Sigmoid colon (tissue), 7 donors: ENCODE measurements at regions of chr19 and their contacts with region 1.

Region 1: GRCh38 chr19:55516878-55517620 is 19.9 kb downstream of the SBK2 start:
- DNase-seq: peak; percentile 97
- H3K4me3 ChIP-seq: peak overlapping the region; percentile 35 to 57 (median 45)
- H3K27ac ChIP-seq: peak overlapping the region; percentile 83 to 94 (median 87)
- H3K4me1 ChIP-seq: peaks cover 0 to 17% (median 7%) of the 10 kb centered on the region in 4 donors
- H3K27me3 ChIP-seq: no peaks in the 10 kb centered on the region
- CTCF ChIP-seq: peak; percentile 82 to 93 (median 92)
- EP300 ChIP-seq: no peak
- POLR2A ChIP-seq: peak in 1 of 2 donors; percentile 39

Region 2: GRCh38 chr19:55580628-55581144 is 63.6 kb after region 1 on chr19 and contains the start of gene ZNF579:
- intact Hi-C with region 1: loop called (anchors 1 kb)
- DNase-seq: peak; percentile 93
- H3K4me3 ChIP-seq: peak within 1 kb of the TSS; percentile 71 to 90 (median 85)
- H3K27ac ChIP-seq: peak within 1 kb of the TSS; percentile 86 to 94 (median 90)
- H3K4me1 ChIP-seq: peaks cover 0 to 31% (median 23%) of the 10 kb centered on the region in 4 donors
- H3K27me3 ChIP-seq: no peaks in the 10 kb centered on the region
- CTCF ChIP-seq: no peak
- EP300 ChIP-seq: no peak
- POLR2A ChIP-seq: no peak
- total RNA-seq, gene ZNF579: 1.4 to 3.0 (median 2.2) TPM

Region 3: DNA sequence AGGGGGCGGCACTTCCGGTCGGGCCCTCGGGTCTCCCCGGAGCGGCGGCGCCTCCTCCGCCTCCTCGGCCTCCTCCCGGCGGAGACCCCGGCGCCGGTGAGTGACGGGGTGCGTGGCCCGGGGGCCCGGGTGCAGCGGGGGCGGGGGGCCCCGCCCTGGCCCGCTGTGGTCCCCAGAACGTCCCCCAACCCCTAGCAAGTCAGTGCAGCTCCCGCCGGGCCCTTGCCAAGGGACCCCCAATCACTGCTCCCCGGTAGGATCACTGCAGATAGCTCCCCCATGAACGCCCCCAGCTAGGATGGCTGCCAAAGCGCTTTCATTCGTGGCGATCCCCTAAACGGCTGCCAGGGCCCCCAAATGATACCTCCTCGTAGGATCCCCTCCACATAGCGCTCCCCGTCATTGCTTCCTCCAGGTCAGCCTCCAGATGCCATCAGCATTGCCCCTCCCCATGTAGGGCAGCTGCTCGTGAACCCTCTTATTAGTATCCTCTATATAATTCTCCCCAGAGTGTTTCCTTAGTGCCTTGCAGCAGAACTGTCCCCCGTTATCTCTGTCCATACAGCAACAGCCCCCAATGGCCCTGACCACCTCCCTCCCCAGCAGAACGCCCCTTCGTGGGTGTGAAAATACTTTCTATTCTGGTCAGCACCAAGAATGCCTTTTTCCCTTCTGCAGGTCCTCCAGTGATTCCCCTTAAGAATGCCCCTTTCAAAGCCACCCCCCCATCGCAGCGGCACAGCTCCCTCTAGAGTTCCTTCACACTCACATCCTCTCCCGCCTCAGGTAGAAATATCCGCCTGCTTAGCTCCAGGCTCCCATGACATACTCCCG is 88.8 kb after region 1 on chr19 and contains the start of gene ZNF865:
- intact Hi-C with region 1: loop called (anchors 1 kb)
- DNase-seq: peak; percentile 87
- H3K4me3 ChIP-seq: peak within 1 kb of the TSS; percentile 79 to 94 (median 90)
- H3K27ac ChIP-seq: peak within 1 kb of the TSS; percentile 95 to 98 (median 96)
- H3K4me1 ChIP-seq: peaks cover 0 to 40% (median 34%) of the 10 kb centered on the region in 4 donors
- H3K27me3 ChIP-seq: no peaks in the 10 kb centered on the region
- CTCF ChIP-seq: peak; percentile 40 to 66 (median 60)
- EP300 ChIP-seq: no peak
- POLR2A ChIP-seq: no peak
- total RNA-seq, gene ZNF865: 2.3 to 8.6 (median 3.4) TPM

Region 4: DNA sequence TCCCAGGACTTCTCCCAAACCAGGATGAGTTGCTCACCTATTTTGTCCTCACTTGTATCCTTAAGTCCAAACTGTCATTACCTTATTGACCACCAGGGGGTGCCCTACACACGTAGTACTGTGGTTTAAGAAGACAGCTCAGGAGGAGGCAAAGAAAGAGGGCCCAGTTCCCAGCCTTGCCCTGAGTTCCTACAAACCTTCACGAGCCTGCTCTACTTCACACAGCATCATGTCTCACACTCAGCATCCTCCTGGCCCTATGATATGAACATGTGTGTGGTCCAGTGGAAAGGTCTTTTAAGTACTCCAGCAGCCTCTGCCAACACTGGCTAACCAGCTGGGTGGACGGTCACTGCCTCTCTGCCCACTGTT is 115.4 kb after region 1 on chr19:
- intact Hi-C with region 1: loop called (anchors 2 kb)
- DNase-seq: peak; percentile 96
- H3K4me3 ChIP-seq: no peak overlapping the region
- H3K27ac ChIP-seq: peak overlapping the region; percentile 69 to 98 (median 75)
- H3K4me1 ChIP-seq: peaks cover 0 to 34% (median 32%) of the 10 kb centered on the region in 4 donors
- H3K27me3 ChIP-seq: no peaks in the 10 kb centered on the region
- CTCF ChIP-seq: peak; percentile 85 to 95 (median 92)
- EP300 ChIP-seq: no peak
- POLR2A ChIP-seq: no peak